IMR-90 (cell line): ENCODE measurements at regions of chr5 and their contacts with region 1.

Region 1: GRCh38 chr5:170974461-170974860 is 112.6 kb downstream of the RANBP17 start:
- DNase-seq: no peak
- ATAC-seq: no peak
- H3K4me3 ChIP-seq: no peak overlapping the region
- H3K27ac ChIP-seq: no peak overlapping the region
- H3K4me1 ChIP-seq: no peaks in the 10 kb centered on the region
- H3K27me3 ChIP-seq: no peaks in the 10 kb centered on the region
- CTCF ChIP-seq: no peak
- POLR2A ChIP-seq: no peak
- RAD21 ChIP-seq: no peak

Region 2: GRCh38 chr5:170937914-170938313 is 36.5 kb before region 1 on chr5:
- CTCF ChIA-PET with region 1: no interaction called
- POLR2A ChIA-PET with region 1: no interaction called
- dilution Hi-C with region 1: no loop called
- in situ Hi-C with region 1: no loop called
- intact Hi-C with region 1: loop called (anchors 5 kb)
- DNase-seq: no peak
- ATAC-seq: no peak
- H3K4me3 ChIP-seq: no peak overlapping the region
- H3K27ac ChIP-seq: no peak overlapping the region
- H3K4me1 ChIP-seq: no peaks in the 10 kb centered on the region
- H3K27me3 ChIP-seq: no peaks in the 10 kb centered on the region
- CTCF ChIP-seq: no peak
- POLR2A ChIP-seq: no peak
- RAD21 ChIP-seq: no peak